Keratinocyte (primary cell): ENCODE measurements at regions of chr1 and their contacts with region 1.

Region 1: GRCh38 chr1:209827384-209828262 is at the start of gene UTP25:
- DNase-seq: no peak
- H3K4me3 ChIP-seq: peak within 1 kb of the TSS; percentile 72 to 97 (median 95)
- H3K27ac ChIP-seq: peak within 1 kb of the TSS; percentile 92
- H3K4me1 ChIP-seq: peaks cover 57% of the 10 kb centered on the region
- H3K27me3 ChIP-seq: no peaks in the 10 kb centered on the region
- CTCF ChIP-seq: peak; percentile 76 to 83 (median 77)
- polyA plus RNA-seq, gene UTP25: 12.3 to 13.3 TPM (median 12.4 TPM) in 3 replicates

Region 2: DNA sequence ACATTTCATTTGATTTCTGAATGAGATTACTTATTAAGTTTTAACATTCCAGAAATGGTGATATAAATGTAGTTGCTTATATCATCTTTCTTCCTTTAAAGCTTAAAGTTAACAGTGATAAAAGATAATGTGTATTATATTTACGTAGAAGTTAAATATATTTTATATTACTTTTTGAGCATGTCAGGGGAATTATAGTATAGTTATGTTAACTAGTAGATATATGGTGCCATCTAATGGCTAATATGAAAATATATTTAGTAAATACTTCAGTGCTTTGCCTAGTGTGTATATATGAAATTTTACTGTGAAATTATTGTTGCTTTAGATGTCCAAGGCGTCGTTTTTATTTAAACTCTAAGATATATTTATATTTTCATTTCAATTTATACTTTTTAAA is 161.9 kb after region 1 on chr1:
- dilution Hi-C with region 1: loop called (anchors 25 kb)
- DNase-seq: no peak
- H3K4me3 ChIP-seq: no peak overlapping the region
- H3K27ac ChIP-seq: no peak overlapping the region
- H3K4me1 ChIP-seq: peaks cover 5% of the 10 kb centered on the region
- H3K27me3 ChIP-seq: no peaks in the 10 kb centered on the region
- CTCF ChIP-seq: no peak